GM12878 (cell line): ENCODE measurements at regions of chr12 and their contacts with region 1.

Region 1: DNA sequence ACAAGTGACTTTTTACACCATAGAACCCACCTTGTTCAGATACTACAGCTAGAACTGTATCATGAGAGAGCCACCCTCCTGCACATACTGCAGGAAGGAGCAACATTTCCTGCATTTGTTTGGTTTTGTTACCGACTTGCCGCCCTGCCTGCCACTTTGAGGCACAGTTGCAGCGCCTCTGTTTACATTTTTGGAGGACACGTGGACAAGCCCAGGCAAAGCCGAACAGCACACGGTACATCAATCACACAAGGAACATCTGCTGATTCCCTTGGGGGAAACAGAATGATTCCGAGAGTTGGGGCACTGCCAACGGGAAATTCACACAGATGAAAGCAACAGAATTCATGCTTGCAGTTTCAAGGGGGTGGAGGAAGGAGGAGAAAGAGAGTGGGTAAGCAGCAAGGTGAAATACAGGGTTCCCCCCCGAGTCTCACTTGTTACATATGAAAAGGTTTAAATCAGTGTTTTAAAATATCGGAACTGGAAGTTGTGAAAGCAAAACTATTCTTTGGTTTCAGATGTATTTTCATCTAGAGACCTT is 110.7 kb downstream of the BTG1 start:
- DNase-seq: peak; percentile 99
- ATAC-seq: peak; percentile 84
- H3K4me3 ChIP-seq: peak overlapping the region; percentile 27
- H3K27ac ChIP-seq: peak overlapping the region; percentile 80
- H3K4me1 ChIP-seq: peaks cover 13% of the 10 kb centered on the region
- H3K27me3 ChIP-seq: no peaks in the 10 kb centered on the region
- CTCF ChIP-seq: no peak
- EP300 ChIP-seq: peak; percentile 89 to 90
- POLR2A ChIP-seq: peak; percentile 36; the same call in 1 of the 2 replicates
- RAD21 ChIP-seq: peak; percentile 41

Region 2: DNA sequence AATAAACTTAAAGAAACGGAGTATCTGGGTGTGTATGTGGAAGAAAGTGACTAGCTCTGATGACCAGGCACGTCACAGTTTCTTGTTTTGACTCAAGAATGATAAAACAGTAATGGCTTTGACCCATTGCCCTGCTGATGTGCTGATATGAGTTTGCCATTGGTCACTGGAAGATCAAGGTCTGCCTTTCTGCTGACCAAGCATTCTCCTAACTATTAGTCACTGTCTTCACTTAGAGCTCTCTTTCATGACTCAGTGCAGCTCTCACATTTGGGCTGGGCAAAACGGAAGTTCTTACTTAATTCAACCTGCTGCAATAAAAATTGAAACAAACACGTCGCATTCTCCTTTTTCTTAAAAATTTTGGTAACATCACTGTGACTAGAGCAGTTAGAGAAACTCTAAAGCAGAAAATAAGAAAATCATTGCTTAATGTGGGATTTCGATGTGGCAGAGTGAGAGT is 256.0 kb before region 1 on chr12:
- CTCF ChIA-PET with region 1: no interaction called
- POLR2A ChIA-PET with region 1: no interaction called
- RAD21 ChIA-PET with region 1: interaction called, 4 read pairs
- SMC1A ChIA-PET with region 1: interaction called, 3 read pairs
- in situ Hi-C with region 1: no loop called
- intact Hi-C with region 1: loop called (anchors 2 kb)
- DNase-seq: peak; percentile 93
- ATAC-seq: peak; percentile 99
- H3K4me3 ChIP-seq: peak overlapping the region; percentile 34; the same call in 1 of the 2 replicates
- H3K27ac ChIP-seq: peak overlapping the region; percentile 65
- H3K4me1 ChIP-seq: peaks cover 7% of the 10 kb centered on the region
- H3K27me3 ChIP-seq: no peaks in the 10 kb centered on the region
- CTCF ChIP-seq: no peak
- EP300 ChIP-seq: peak; percentile 29 to 80; a peak in 1 of 4 replicates
- POLR2A ChIP-seq: no peak
- RAD21 ChIP-seq: no peak

Region 3: GRCh38 chr12:91883781-91884180 is 151.1 kb before region 1 on chr12:
- CTCF ChIA-PET with region 1: no interaction called
- POLR2A ChIA-PET with region 1: no interaction called
- RAD21 ChIA-PET with region 1: no interaction called
- SMC1A ChIA-PET with region 1: no interaction called
- in situ Hi-C with region 1: no loop called
- intact Hi-C with region 1: no loop called
- DNase-seq: no peak
- ATAC-seq: no peak
- H3K4me3 ChIP-seq: no peak overlapping the region
- H3K27ac ChIP-seq: no peak overlapping the region
- H3K4me1 ChIP-seq: no peaks in the 10 kb centered on the region
- H3K27me3 ChIP-seq: no peaks in the 10 kb centered on the region
- CTCF ChIP-seq: no peak
- EP300 ChIP-seq: no peak
- POLR2A ChIP-seq: no peak
- RAD21 ChIP-seq: no peak

Region 4: GRCh38 chr12:91991399-91992187 is 43.3 kb before region 1 on chr12:
- CTCF ChIA-PET with region 1: no interaction called
- POLR2A ChIA-PET with region 1: no interaction called
- RAD21 ChIA-PET with region 1: interaction called, 6 read pairs
- SMC1A ChIA-PET with region 1: interaction called, 16 read pairs
- in situ Hi-C with region 1: no loop called
- intact Hi-C with region 1: no loop called
- DNase-seq: peak; percentile 32
- ATAC-seq: peak; percentile 94
- H3K4me3 ChIP-seq: no peak overlapping the region
- H3K27ac ChIP-seq: no peak overlapping the region
- H3K4me1 ChIP-seq: no peaks in the 10 kb centered on the region
- H3K27me3 ChIP-seq: no peaks in the 10 kb centered on the region
- CTCF ChIP-seq: peak in 2 of 3 experiments; percentile 35 to 56; a peak in 3 of 6 replicates
- EP300 ChIP-seq: no peak
- POLR2A ChIP-seq: no peak
- RAD21 ChIP-seq: peak; percentile 61

Region 5: DNA sequence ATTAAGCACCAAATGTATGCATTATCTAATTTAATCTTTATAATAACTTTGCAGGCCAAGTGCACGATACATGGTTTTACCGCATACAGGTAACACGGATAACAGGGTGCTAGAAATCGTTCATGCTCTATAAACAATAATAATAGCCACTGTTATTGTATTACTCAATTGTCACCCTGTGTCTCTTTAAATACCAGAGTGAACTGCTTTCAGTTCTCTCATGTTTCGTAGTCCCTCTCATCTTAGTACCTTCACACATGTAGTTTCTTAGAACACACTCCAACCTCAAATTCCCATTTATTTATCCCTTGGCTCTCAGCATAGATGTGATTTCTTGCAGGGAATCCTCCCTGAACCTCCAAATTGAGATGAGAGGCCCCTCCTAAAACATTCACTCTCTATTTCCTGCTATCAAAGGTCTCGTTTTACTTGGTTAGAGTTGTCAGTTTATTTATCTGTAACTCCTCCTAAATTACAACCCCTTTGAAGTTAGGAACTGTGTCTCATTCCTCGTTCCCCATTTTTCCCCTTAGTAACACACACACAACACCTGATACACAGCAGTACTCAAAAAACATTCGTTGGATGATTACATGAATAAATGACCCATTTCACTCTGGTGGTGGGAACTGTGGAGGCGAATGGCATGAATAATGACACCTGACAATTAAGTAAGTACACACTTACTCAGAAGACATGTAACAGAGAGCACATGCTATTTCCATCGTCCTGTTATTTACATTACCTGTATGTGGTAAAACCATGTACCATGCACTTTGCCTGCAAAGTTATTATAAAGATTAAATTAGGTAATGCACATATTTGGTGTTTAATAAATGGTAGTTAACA is 23.9 kb before region 1 on chr12:
- CTCF ChIA-PET with region 1: interaction called, 4 read pairs
- POLR2A ChIA-PET with region 1: no interaction called
- RAD21 ChIA-PET with region 1: interaction called, 19 read pairs
- SMC1A ChIA-PET with region 1: interaction called, 27 read pairs
- in situ Hi-C with region 1: no loop called
- intact Hi-C with region 1: no loop called
- DNase-seq: no peak
- ATAC-seq: peak; percentile 79
- H3K4me3 ChIP-seq: no peak overlapping the region
- H3K27ac ChIP-seq: no peak overlapping the region
- H3K4me1 ChIP-seq: peaks cover 3% of the 10 kb centered on the region; the same call in 1 of the 2 replicates
- H3K27me3 ChIP-seq: no peaks in the 10 kb centered on the region
- CTCF ChIP-seq: no peak
- EP300 ChIP-seq: no peak
- POLR2A ChIP-seq: no peak
- RAD21 ChIP-seq: no peak

Region 6: GRCh38 chr12:92021665-92022033 is 13.3 kb before region 1 on chr12:
- CTCF ChIA-PET with region 1: interaction called, 5 read pairs
- POLR2A ChIA-PET with region 1: interaction called, 4 read pairs
- RAD21 ChIA-PET with region 1: interaction called, 6 read pairs
- SMC1A ChIA-PET with region 1: interaction called, 18 read pairs
- in situ Hi-C with region 1: no loop called
- intact Hi-C with region 1: no loop called
- DNase-seq: no peak
- ATAC-seq: no peak
- H3K4me3 ChIP-seq: no peak overlapping the region
- H3K27ac ChIP-seq: no peak overlapping the region
- H3K4me1 ChIP-seq: no peaks in the 10 kb centered on the region
- H3K27me3 ChIP-seq: no peaks in the 10 kb centered on the region
- CTCF ChIP-seq: no peak
- EP300 ChIP-seq: no peak
- POLR2A ChIP-seq: no peak
- RAD21 ChIP-seq: no peak

Region 7: GRCh38 chr12:92049403-92049802 is 14.5 kb after region 1 on chr12:
- CTCF ChIA-PET with region 1: interaction called, 8 read pairs
- POLR2A ChIA-PET with region 1: interaction called, 18 read pairs
- RAD21 ChIA-PET with region 1: interaction called, 28 read pairs
- SMC1A ChIA-PET with region 1: interaction called, 70 read pairs
- in situ Hi-C with region 1: no loop called
- intact Hi-C with region 1: no loop called
- DNase-seq: peak; percentile 74
- ATAC-seq: peak; percentile 80
- H3K4me3 ChIP-seq: no peak overlapping the region
- H3K27ac ChIP-seq: no peak overlapping the region
- H3K4me1 ChIP-seq: peaks cover 24% of the 10 kb centered on the region
- H3K27me3 ChIP-seq: no peaks in the 10 kb centered on the region
- CTCF ChIP-seq: no peak
- EP300 ChIP-seq: peak in 1 of 2 experiments; percentile 33; a peak in 1 of 4 replicates
- POLR2A ChIP-seq: no peak
- RAD21 ChIP-seq: no peak

Region 8: DNA sequence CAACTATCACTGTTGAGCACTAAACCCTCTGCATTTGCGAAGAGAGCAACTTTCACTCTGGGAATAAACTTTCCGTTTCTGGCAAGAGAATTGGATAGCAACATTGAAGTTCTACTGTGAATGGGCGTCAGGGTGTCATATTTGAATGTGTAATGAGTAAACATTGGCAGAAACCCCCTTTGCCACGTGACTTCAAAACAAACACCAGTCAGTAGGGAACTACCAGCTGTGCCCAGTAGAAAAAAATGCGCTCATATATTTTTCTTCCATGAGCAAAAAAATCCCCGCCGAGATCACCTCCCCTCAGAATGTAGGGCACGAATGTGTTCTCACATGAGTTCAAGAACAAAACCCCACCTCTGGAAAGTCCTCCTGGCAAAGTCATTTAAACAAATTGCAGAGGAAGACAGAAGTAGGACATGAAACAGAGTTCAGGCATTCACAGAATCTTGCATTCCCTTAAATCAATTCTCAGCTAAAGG is 30.1 kb after region 1 on chr12:
- CTCF ChIA-PET with region 1: interaction called, 3 read pairs
- POLR2A ChIA-PET with region 1: interaction called, 4 read pairs
- RAD21 ChIA-PET with region 1: interaction called, 5 read pairs
- SMC1A ChIA-PET with region 1: interaction called, 43 read pairs
- in situ Hi-C with region 1: no loop called
- intact Hi-C with region 1: no loop called
- DNase-seq: peak; percentile 78
- ATAC-seq: peak; percentile 81
- H3K4me3 ChIP-seq: no peak overlapping the region
- H3K27ac ChIP-seq: peak overlapping the region; percentile 3
- H3K4me1 ChIP-seq: peaks cover 13% of the 10 kb centered on the region
- H3K27me3 ChIP-seq: no peaks in the 10 kb centered on the region
- CTCF ChIP-seq: no peak
- EP300 ChIP-seq: peak; percentile 25 to 46; a peak in 1 of 4 replicates
- POLR2A ChIP-seq: no peak
- RAD21 ChIP-seq: no peak